ENCODE measurements at regions of chr6 and their contacts with region 1.

Region 1: DNA sequence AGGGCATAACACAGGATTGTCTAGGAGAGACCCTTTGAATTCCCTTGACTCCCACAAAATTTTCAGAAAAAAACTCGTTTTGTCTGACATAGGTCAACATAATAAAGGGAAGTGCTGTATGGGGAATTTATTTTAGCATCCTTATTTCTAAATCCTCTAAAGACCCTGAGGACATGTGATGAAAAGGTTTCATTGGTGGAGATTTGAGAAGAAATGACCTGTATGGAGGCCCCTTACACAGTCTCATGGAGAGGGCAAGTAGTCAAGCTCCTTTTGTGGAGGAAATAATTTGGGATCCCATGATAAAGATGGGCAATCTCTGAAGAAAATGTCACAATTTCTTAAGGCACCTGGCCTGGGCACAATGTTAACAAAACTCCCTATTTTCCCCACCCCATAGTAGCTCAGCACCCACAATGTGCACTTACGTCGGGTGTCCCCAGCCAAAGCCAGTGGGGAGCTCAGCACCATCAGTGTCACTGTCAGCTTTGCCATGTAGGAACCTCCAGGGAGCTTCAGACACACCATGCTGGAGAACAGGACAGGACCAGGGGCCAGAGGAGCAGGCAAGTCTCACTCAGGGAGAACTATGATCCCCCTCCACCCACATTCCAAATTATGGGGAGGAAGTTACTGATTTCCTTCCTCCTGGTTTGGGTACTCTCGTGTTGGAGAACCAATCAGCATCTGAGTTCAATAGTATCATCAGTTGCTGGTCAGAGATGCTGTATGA is at the start of gene HLA-DRB5:
- DNase-seq: peak in 1 of 2 donors; percentile 73
- ATAC-seq: peak in 7 of 8 donors; percentile 88 to 98 (median 96)
- H3K4me3 ChIP-seq: peak within 1 kb of the TSS in 7 of 10 donors; percentile 4 to 62 (median 41)
- H3K27ac ChIP-seq: peak within 1 kb of the TSS in 9 of 10 donors; percentile 20 to 95 (median 71)
- H3K4me1 ChIP-seq: peaks cover 0 to 11% (median 0%) of the 10 kb centered on the region in 9 donors
- H3K27me3 ChIP-seq: no peaks in the 10 kb centered on the region
- CTCF ChIP-seq: no peak
- total RNA-seq, gene HLA-DRB5: 5.8 to 109 (median 48.8) TPM

Region 2: DNA sequence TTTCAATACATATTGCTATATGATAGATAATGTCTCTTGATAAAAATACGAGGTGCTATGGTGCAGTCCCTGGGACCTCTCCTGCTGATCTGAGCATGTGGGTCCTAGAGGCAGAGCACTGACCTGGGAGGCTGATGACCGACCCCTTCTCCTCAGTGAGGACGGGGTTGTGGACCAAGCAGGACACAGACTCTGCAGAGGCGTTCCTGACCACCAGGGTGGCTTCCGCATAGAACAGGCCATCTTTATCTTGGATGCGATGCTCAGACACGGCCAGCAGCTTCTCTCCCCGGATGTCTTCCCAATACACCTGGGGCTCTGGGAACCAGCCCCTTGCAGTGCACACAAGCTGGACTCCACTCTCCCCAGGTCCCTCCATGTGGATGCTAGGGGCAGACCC is 127.1 kb before region 1 on chr6:
- intact Hi-C with region 1: no loop called
- DNase-seq: no peak
- ATAC-seq: no peak
- H3K4me3 ChIP-seq: no peak overlapping the region
- H3K27ac ChIP-seq: no peak overlapping the region
- H3K4me1 ChIP-seq: peaks cover 0 to 3% (median 0%) of the 10 kb centered on the region in 9 donors
- H3K27me3 ChIP-seq: peaks cover 0 to 55% (median 38%) of the 10 kb centered on the region in 7 donors
- CTCF ChIP-seq: no peak

Region 3: DNA sequence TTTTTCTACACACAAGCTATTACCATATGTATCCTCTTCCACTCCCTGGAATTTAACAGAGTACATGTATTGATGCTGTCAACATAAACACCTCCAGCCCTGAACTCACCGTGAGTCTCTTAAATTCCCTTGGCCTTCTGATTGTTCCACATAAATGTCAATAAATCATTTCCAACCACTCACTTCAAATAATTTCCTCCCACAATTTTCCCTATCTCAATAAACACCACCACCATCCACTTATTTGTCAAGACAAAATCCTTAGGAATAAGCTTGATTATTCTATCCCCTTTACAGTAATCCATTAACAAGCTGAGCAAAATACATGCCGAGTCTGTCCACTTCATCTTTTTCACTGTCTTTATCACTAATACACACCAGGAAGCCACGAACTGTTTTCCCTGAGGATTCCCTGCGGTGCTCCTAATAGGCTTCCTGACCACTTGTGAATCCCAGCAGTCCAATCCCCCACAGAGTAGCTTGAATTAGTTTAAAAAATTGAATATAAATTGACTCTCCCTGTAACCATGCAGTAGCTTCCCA is 40.6 kb after region 1 on chr6:
- intact Hi-C with region 1: loop called in 2 of 10 experiments (anchors 5 kb)
- DNase-seq: no peak
- ATAC-seq: no peak
- H3K4me3 ChIP-seq: no peak overlapping the region
- H3K27ac ChIP-seq: no peak overlapping the region
- H3K4me1 ChIP-seq: no peaks in the 10 kb centered on the region
- H3K27me3 ChIP-seq: no peaks in the 10 kb centered on the region
- CTCF ChIP-seq: no peak

Region 4: DNA sequence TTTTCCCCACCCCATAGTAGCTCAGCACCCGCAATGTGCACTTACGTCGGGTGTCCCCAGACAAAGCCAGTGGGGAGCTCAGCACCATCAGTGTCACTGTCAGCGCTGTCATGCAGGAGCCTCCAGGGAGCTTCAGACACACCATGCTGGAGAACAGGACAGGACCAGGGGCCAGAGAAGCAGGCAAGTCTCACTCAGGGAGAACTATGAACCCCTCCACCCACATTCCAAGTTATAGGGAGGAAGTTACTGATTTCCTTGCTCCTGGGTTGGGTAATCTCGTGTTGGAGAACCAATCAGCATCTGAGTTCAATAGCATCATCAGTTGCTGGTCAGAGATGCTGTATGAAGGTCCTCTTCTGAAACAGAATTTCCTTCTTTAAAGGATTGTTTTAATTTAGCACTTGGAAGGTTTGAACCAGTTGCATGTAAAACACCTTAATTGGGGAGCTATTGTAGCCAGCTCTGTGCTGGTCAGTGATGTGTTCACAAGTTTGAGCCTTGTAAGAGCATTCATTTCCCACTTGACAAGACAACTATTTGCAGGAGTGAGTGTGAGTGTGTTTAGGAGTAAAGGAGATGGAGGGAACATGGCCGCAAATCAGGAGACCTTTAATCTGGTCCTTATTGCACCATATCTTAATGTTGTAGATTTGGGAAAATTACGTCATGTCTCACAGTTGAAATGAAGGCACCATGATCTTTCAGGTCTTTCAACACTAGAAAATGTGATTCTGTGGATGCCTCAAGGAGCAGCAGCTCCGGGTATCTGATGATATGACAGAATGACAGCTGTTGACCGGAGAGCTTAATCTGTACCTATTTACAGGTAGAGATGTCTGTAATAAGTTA is 60.0 kb after region 1 on chr6 and contains the start of gene HLA-DRB1:
- intact Hi-C with region 1: loop called in 5 of 10 experiments (anchors 5 to 10 kb)
- DNase-seq: peak; percentile 26 to 60
- ATAC-seq: peak; percentile 95 to 99 (median 97)
- H3K4me3 ChIP-seq: peak within 1 kb of the TSS in 7 of 10 donors; percentile 8 to 60 (median 48)
- H3K27ac ChIP-seq: peak within 1 kb of the TSS in 7 of 10 donors; percentile 70 to 93 (median 74)
- H3K4me1 ChIP-seq: peaks cover 0 to 7% (median 0%) of the 10 kb centered on the region in 9 donors
- H3K27me3 ChIP-seq: no peaks in the 10 kb centered on the region
- CTCF ChIP-seq: no peak
- total RNA-seq, gene HLA-DRB1: 29.2 to 313 (median 76.4) TPM